ENCODE measurements at regions of chr9 and their contacts with region 1.

Region 1: DNA sequence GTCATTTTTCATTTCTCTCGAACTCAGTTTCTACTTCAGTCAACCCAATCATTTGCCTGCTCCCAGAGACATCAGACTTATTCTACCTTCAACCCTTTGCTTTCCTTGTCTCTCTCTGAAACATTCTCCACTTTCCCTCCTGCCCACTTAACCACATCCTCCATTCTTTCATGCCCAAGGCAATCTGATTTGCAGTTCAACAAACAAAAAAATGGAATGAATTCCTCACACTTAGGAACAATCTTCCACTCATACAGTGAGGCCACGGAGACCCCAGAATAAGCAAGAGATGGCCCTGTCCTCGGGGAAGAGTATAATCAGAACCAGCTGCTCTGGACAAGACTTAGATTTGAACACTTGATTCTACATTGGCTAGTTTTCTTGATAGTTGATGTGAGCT is 180.5 kb downstream of the RFK start:
- DNase-seq: no peak
- H3K4me3 ChIP-seq: no peak overlapping the region
- H3K27me3 ChIP-seq: no peaks in the 10 kb centered on the region
- CTCF ChIP-seq: no peak

Region 2: DNA sequence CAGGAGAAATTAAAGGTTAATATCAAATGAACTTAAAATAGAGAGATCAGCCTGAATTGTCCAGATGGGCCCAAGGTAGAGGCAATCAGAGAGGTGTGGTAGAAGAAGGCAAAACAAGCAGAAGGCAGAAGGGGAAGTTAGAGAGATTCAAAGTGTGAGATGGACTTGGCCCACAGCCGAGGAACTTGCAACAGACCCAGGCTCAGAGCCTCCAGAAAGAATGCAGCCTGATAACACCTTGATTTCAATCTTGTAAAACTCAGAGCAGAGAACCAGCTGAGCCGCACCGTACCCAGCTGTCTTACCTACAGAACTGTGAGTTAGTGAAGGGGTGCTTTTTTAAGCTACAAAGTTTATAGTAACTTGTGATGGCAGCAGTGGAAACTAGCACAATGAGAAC is 10.4 kb before region 1 on chr9:
- CTCF ChIA-PET with region 1: interaction called, 18 read pairs
- POLR2A ChIA-PET with region 1: no interaction called
- DNase-seq: no peak
- H3K4me3 ChIP-seq: no peak overlapping the region
- H3K27me3 ChIP-seq: no peaks in the 10 kb centered on the region
- CTCF ChIP-seq: no peak

Region 3: DNA sequence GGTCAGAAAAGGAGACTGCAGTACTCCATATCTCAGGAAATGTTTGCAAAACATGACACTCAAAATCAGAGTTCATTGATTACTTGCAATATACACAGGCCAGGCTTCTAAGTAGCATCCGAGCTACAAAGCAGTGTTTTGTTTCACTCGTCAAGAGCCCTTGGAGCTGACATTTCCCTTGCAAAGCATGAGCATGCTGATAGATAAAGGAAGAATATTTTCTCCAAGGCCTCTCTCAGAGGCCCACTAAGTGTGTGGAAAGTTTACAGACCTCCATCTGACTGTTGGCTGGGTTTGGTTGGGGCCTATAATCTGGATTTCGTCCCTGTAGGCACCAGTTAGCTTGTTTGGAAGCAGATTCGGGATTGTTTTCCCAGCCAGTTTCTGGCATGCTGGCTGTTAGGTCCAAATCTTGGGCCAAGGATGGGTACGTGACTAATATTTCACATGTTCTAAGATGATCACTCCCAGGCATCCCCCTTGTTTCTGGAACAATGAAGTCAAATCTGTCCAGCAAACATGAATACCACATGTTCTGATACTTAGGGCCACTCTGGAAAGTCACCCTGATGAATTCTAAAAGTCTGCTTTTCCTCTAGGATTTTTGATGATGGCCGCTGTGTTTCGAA is 19.2 kb after region 1 on chr9:
- CTCF ChIA-PET with region 1: no interaction called
- POLR2A ChIA-PET with region 1: no interaction called
- DNase-seq: no peak
- H3K4me3 ChIP-seq: no peak overlapping the region
- H3K27me3 ChIP-seq: no peaks in the 10 kb centered on the region
- CTCF ChIP-seq: no peak